ENCODE measurements at regions of chr7 and their contacts with region 1.

Region 1: DNA sequence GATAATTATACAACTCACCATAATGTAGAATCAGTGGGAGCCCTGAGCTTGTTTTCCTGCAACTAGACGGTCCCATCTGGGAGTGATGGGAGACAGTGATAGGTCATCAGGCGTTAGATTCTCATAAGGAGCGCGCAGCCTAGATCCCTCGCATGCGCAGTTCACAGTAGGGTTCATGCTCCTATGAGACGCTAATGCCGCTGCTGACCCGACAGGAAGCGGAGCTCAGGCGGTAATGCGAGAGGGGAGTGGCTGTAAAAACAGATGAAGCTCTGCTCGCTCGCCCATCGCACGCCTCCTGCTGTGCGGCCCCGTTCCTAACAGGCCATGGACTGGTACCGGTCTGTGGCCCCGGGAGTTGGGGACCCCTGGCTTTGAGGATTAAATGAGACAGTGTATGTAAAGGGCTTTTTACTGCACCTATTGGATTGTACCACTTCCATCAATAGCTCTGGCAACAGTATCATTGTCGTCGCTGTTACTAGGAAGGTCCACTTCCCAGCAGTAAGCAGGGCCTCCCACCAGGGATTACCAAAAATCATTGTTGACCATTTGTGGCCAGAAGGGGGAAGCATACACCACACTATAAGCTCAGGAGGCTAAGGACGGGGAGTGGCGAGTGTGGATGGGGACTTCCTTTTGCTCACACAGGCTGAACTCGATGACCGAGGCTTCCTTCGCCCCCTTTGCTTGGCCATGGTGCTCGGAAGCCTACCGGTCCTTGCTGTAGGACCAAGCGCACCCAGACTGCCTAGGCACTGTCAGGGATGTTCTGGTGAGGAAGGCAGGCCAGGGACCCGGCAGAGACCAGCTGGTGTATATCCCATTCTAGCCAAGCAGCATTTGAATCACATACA is 26.4 kb downstream of the AKR1B1 start:
- DNase-seq: peak; percentile 69 to 85
- ATAC-seq: peak; percentile 94 to 95 (median 95)
- H3K4me3 ChIP-seq: peak overlapping the region; percentile 39
- H3K4me3 Mint-ChIP-seq: peak overlapping the region; percentile 89
- H3K27ac ChIP-seq: peak overlapping the region; percentile 79
- H3K27ac Mint-ChIP-seq: peak overlapping the region; percentile 89 to 97
- H3K4me1 ChIP-seq: peaks cover 14% of the 10 kb centered on the region
- H3K4me1 Mint-ChIP-seq: peaks cover 16% of the 10 kb centered on the region in 2 donors
- H3K27me3 ChIP-seq: no peaks in the 10 kb centered on the region
- H3K27me3 Mint-ChIP-seq: no peaks in the 10 kb centered on the region
- CTCF ChIP-seq: peak; percentile 74

Region 2: DNA sequence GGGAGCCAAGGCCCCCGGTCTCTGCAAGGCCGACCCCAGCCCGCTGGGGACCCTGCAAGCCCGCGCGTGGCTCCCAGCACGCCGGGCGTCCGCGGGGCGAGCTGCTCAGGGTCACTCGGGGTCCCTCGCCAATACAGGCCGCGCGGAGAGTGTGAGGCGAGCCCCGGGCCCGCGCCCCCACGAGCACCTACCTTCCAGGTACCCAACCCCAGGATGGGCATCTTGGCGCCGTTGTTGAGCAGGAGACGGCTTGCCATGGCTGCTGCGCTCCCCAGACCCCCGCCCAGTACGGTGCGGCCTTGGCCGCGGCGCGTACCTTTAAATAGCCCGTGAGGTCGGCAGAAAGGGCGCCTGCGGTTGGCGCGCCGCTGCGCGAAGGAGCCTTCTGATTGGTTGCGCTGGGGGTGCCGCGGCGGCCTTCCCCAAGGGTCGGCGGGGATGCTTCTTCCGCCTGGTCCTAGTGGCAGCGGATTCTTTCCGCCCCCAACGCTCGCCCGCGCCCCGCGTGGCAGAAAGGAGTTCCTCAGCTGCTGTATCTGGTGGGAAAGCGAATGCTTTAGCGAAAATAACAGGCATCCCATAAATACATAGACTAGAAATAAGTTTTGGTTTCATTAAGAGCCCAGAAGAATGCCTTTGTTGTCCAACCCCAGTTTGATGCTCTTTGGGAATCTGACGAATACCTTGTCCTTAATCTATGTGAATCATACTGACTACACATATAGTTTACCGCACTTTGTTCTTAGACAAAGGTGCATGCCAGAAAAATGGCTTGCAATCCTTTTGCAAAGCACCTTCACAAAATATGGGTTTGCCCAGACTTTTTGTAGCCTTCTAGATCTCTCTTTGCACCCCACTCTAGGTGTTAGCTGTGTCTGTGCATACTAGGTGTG is 26.5 kb after region 1 on chr7 and contains the start of gene AKR1B1:
- intact Hi-C with region 1: loop called (anchors 1 kb)
- DNase-seq: peak; percentile 89 to 92
- ATAC-seq: peak; percentile 86 to 93 (median 91)
- H3K4me3 ChIP-seq: peak within 1 kb of the TSS; percentile 79
- H3K4me3 Mint-ChIP-seq: peak within 1 kb of the TSS; percentile 93
- H3K27ac ChIP-seq: peak within 1 kb of the TSS; percentile 72
- H3K27ac Mint-ChIP-seq: peak within 1 kb of the TSS; percentile 83 to 92
- H3K4me1 ChIP-seq: peaks cover 16% of the 10 kb centered on the region
- H3K4me1 Mint-ChIP-seq: peaks cover 38 to 39% of the 10 kb centered on the region in 2 donors
- H3K27me3 ChIP-seq: no peaks in the 10 kb centered on the region
- H3K27me3 Mint-ChIP-seq: no peaks in the 10 kb centered on the region
- CTCF ChIP-seq: peak; percentile 46
- total RNA-seq, gene AKR1B1: 68.4 to 106 (median 85.1) TPM

Region 3: GRCh38 chr7:134491963-134492362 is 59.4 kb after region 1 on chr7:
- intact Hi-C with region 1: no loop called
- DNase-seq: no peak
- ATAC-seq: no peak
- H3K4me3 ChIP-seq: no peak overlapping the region
- H3K4me3 Mint-ChIP-seq: no peak overlapping the region
- H3K27ac ChIP-seq: no peak overlapping the region
- H3K27ac Mint-ChIP-seq: no peak overlapping the region
- H3K4me1 ChIP-seq: no peaks in the 10 kb centered on the region
- H3K4me1 Mint-ChIP-seq: no peaks in the 10 kb centered on the region
- H3K27me3 ChIP-seq: peaks cover 11% of the 10 kb centered on the region
- H3K27me3 Mint-ChIP-seq: peaks cover 10 to 14% of the 10 kb centered on the region in 2 donors
- CTCF ChIP-seq: no peak

Region 4: GRCh38 chr7:134514663-134515062 is 82.1 kb after region 1 on chr7:
- intact Hi-C with region 1: loop called (anchors 1 kb)
- DNase-seq: peak in 1 of 2 donors; percentile 81
- ATAC-seq: peak; percentile 67 to 87 (median 77)
- H3K4me3 ChIP-seq: no peak overlapping the region
- H3K4me3 Mint-ChIP-seq: no peak overlapping the region
- H3K27ac ChIP-seq: no peak overlapping the region
- H3K27ac Mint-ChIP-seq: no peak overlapping the region
- H3K4me1 ChIP-seq: no peaks in the 10 kb centered on the region
- H3K4me1 Mint-ChIP-seq: peaks cover 0 to 5% of the 10 kb centered on the region in 2 donors
- H3K27me3 ChIP-seq: no peaks in the 10 kb centered on the region
- H3K27me3 Mint-ChIP-seq: peaks cover 12 to 13% of the 10 kb centered on the region in 2 donors
- CTCF ChIP-seq: peak; percentile 92

Region 5: GRCh38 chr7:134547397-134548054 is 115.0 kb after region 1 on chr7:
- intact Hi-C with region 1: loop called (anchors 1 kb)
- DNase-seq: peak; percentile 59 to 79
- ATAC-seq: peak; percentile 63 to 87 (median 72)
- H3K4me3 ChIP-seq: no peak overlapping the region
- H3K4me3 Mint-ChIP-seq: no peak overlapping the region
- H3K27ac ChIP-seq: no peak overlapping the region
- H3K27ac Mint-ChIP-seq: no peak overlapping the region
- H3K4me1 ChIP-seq: peaks cover 4% of the 10 kb centered on the region
- H3K4me1 Mint-ChIP-seq: peaks cover 0 to 5% of the 10 kb centered on the region in 2 donors
- H3K27me3 ChIP-seq: no peaks in the 10 kb centered on the region
- H3K27me3 Mint-ChIP-seq: peaks cover 19 to 42% of the 10 kb centered on the region in 2 donors
- CTCF ChIP-seq: peak; percentile 80

Region 6: DNA sequence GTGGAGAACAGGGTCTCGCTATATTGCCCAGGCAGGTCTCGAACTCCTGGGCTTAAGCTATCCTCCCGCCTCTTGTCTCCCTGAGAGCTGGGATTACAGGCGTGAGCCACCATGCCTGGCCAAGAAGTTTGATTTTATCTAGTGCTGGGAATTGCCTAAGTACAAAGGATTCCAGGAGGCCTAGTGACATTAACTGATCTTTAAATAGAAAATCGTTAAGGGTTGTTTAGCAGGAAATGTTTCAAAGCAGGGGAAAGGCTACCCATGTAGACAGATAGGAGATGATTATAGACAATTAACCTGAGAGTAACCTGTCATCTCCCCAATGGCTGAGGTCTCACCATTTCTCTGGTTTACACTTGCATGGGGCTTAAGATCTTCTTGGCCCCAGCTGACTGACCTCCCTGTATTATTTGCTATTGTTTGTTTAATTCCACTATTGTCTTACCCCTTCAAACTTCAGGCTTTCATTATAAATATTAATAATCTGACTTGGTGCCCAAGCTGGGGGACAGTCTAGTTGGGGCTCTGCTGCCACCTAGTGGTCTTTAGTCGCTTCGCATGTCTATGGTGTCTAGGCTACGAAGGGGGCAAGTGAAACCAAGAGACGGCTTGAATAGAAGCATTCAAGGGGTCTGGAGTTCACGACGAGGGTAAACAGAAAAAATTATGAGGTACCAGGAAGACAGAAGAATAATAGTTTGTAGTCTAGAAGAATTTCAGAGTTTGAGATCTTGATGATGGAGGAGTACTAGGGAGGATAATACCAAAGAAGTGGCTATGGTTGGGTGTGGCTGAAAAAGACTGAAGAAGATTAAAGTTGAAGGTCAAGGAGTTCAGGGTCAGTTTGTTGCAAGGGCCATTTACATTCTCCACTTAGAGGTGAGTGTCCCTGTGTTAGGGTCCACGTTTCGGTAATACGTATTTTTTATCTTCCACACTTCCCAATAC is 173.7 kb after region 1 on chr7:
- intact Hi-C with region 1: loop called (anchors 1 kb)
- DNase-seq: peak; percentile 40 to 83
- ATAC-seq: peak; percentile 92 to 99 (median 98)
- H3K4me3 ChIP-seq: no peak overlapping the region
- H3K4me3 Mint-ChIP-seq: peak overlapping the region; percentile 55
- H3K27ac ChIP-seq: no peak overlapping the region
- H3K27ac Mint-ChIP-seq: peak overlapping the region in 1 of 2 donors; percentile 23
- H3K4me1 ChIP-seq: no peaks in the 10 kb centered on the region
- H3K4me1 Mint-ChIP-seq: peaks cover 6% of the 10 kb centered on the region in 2 donors
- H3K27me3 ChIP-seq: no peaks in the 10 kb centered on the region
- H3K27me3 Mint-ChIP-seq: peaks cover 26 to 55% of the 10 kb centered on the region in 2 donors
- CTCF ChIP-seq: peak; percentile 94

Region 7: GRCh38 chr7:134646425-134647305 is 214.1 kb after region 1 on chr7 and contains the start of gene BPGM:
- intact Hi-C with region 1: loop called (anchors 1 kb)
- DNase-seq: peak; percentile 94 to 100
- ATAC-seq: peak; percentile 94 to 99 (median 97)
- H3K4me3 ChIP-seq: peak within 1 kb of the TSS; percentile 67
- H3K4me3 Mint-ChIP-seq: no peak within 1 kb of the TSS
- H3K27ac ChIP-seq: peak within 1 kb of the TSS; percentile 93
- H3K27ac Mint-ChIP-seq: no peak within 1 kb of the TSS
- H3K4me1 ChIP-seq: peaks cover 24% of the 10 kb centered on the region
- H3K4me1 Mint-ChIP-seq: peaks cover 39 to 44% of the 10 kb centered on the region in 2 donors
- H3K27me3 ChIP-seq: no peaks in the 10 kb centered on the region
- H3K27me3 Mint-ChIP-seq: no peaks in the 10 kb centered on the region
- CTCF ChIP-seq: no peak
- total RNA-seq, gene BPGM: 30.0 to 39.1 (median 31.4) TPM

Measured in natural killer cell (primary cell).